ENCODE measurements at regions of chr14 and their contacts with region 1.

Region 1: GRCh38 chr14:20413045-20413799 is at the start of gene TEP1:
- DNase-seq: peak; percentile 80
- ATAC-seq: peak; percentile 84
- H3K4me3 Mint-ChIP-seq: peak within 1 kb of the TSS; percentile 87
- H3K27ac Mint-ChIP-seq: peak within 1 kb of the TSS; percentile 95
- H3K4me1 Mint-ChIP-seq: peaks cover 16% of the 10 kb centered on the region
- H3K27me3 Mint-ChIP-seq: no peaks in the 10 kb centered on the region
- CTCF ChIP-seq: no peak
- total RNA-seq, gene TEP1: 16.0 to 19.4 TPM (median 18.8 TPM) in 3 replicates

Region 2: GRCh38 chr14:20343092-20343861 is 69.9 kb before region 1 on chr14 and contains the start of gene PARP2:
- CTCF ChIA-PET with region 1: interaction called, 20 read pairs
- POLR2A ChIA-PET with region 1: interaction called, 23 read pairs
- DNase-seq: peak; percentile 99
- ATAC-seq: peak; percentile 97
- H3K4me3 Mint-ChIP-seq: peak within 1 kb of the TSS; percentile 91
- H3K27ac Mint-ChIP-seq: peak within 1 kb of the TSS; percentile 98
- H3K4me1 Mint-ChIP-seq: peaks cover 8% of the 10 kb centered on the region
- H3K27me3 Mint-ChIP-seq: no peaks in the 10 kb centered on the region
- CTCF ChIP-seq: no peak
- total RNA-seq, gene PARP2: 34.5 to 37.1 TPM (median 36.8 TPM) in 3 replicates

Region 3: GRCh38 chr14:20365928-20366327 is 47.3 kb before region 1 on chr14:
- CTCF ChIA-PET with region 1: no interaction called
- POLR2A ChIA-PET with region 1: no interaction called
- DNase-seq: no peak
- ATAC-seq: no peak
- H3K4me3 Mint-ChIP-seq: no peak overlapping the region
- H3K27ac Mint-ChIP-seq: no peak overlapping the region
- H3K4me1 Mint-ChIP-seq: no peaks in the 10 kb centered on the region
- H3K27me3 Mint-ChIP-seq: no peaks in the 10 kb centered on the region
- CTCF ChIP-seq: no peak

Region 4: GRCh38 chr14:20424851-20425250 is 11.6 kb after region 1 on chr14:
- CTCF ChIA-PET with region 1: interaction called, 16 read pairs
- POLR2A ChIA-PET with region 1: no interaction called
- DNase-seq: no peak
- ATAC-seq: no peak
- H3K4me3 Mint-ChIP-seq: no peak overlapping the region
- H3K27ac Mint-ChIP-seq: no peak overlapping the region
- H3K4me1 Mint-ChIP-seq: peaks cover 30% of the 10 kb centered on the region
- H3K27me3 Mint-ChIP-seq: no peaks in the 10 kb centered on the region
- CTCF ChIP-seq: no peak

Region 5: DNA sequence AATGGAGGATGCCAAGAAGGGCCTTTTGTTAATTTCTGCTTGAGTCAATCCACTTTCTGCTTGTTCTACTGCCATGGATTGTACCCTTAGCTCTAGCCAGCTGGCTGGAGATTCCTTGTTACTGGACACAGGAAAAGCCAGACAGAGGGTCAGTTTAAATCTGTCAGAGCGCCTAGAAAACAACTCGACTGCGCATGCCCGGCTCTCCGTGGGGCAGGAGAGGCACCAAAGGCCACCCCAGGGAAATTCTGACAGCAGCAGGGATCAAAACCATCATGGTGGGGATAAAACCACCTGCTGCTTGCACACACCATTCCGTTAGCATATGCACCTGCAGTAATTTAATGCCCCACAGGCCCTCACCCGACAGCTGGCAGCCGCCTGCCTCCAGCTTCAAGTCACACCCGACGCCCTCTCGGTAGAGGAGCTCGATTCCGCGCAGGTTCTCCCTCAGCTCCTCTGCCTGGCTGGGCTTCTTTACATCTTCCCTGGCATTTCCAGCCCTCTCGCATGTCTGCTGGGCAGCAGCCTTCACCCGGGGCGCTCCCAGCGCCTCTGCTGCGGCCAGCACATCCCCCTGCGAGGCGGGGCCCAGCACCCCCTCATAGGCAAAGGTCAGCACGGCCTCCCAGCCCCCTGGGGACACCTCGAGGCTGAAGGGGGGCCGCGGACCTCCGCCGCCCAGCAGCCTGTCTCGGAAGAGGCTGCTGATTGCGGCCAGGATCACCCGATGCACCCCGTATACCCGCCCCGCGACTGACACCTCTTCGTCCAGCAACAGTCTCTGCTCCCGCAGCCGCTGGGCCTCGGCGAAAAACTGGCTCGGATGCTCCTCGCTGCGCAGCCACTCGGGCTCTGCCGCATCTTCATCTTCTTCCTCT is 21.7 kb after region 1 on chr14:
- CTCF ChIA-PET with region 1: interaction called, 21 read pairs
- POLR2A ChIA-PET with region 1: no interaction called
- DNase-seq: peak; percentile 45
- ATAC-seq: peak; percentile 63
- H3K4me3 Mint-ChIP-seq: peak overlapping the region; percentile 73
- H3K27ac Mint-ChIP-seq: no peak overlapping the region
- H3K4me1 Mint-ChIP-seq: peaks cover 13% of the 10 kb centered on the region
- H3K27me3 Mint-ChIP-seq: peaks cover 34% of the 10 kb centered on the region
- CTCF ChIP-seq: no peak

Region 6: GRCh38 chr14:20454516-20455354 is 41.5 kb after region 1 on chr14 and contains the starts of genes APEX1 and OSGEP:
- CTCF ChIA-PET with region 1: interaction called, 10 read pairs
- POLR2A ChIA-PET with region 1: interaction called, 3 read pairs
- DNase-seq: peak; percentile 97
- ATAC-seq: peak; percentile 82
- H3K4me3 Mint-ChIP-seq: no peak within 1 kb of the TSS
- H3K27ac Mint-ChIP-seq: no peak within 1 kb of the TSS
- H3K4me1 Mint-ChIP-seq: peaks cover 3% of the 10 kb centered on the region; the same call in 1 of the 2 replicates
- H3K27me3 Mint-ChIP-seq: no peaks in the 10 kb centered on the region
- CTCF ChIP-seq: no peak
- total RNA-seq, gene APEX1: 299 to 324 TPM (median 308 TPM) in 3 replicates
- total RNA-seq, gene OSGEP: 33.3 to 40.0 TPM (median 37.3 TPM) in 3 replicates

Region 7: DNA sequence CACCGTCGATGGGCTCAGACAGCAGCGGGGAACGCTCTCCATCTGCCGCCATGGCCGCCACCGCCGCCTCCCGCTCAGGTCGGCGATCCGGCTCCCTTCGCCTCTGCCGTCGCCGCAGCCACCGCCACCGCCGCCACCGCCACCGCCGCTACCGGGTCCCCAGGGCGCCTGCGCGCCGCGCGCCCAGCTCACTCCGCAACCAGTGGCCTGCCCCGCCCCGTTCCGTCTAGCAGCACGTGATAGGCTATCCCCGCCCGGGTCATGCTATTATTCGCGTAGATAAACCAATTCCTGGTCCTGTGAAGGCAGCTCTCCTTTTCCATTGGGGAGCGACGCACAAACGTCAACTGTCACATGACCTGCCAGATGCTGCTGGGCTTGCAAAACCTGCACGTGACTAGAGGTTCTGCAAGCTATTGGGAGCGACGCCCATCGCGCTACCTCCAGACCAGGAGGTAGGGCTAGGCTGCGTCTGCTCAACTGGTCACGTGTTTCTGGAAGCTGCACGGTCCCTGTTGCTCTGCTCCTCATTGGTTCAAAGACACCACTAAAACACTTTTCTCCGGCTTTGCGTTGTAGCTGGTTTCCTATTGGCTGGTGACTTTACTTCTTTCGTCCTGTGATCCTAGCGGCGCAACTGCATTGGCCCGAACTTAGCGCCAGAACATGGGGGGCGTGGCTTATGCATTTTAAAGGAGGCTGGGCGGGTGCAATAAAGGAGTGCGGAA is 48.2 kb after region 1 on chr14 and contains the start of gene PIP4P1:
- CTCF ChIA-PET with region 1: interaction called, 18 read pairs
- POLR2A ChIA-PET with region 1: interaction called, 3 read pairs
- DNase-seq: peak; percentile 97
- ATAC-seq: peak; percentile 95
- H3K4me3 Mint-ChIP-seq: peak within 1 kb of the TSS; percentile 84
- H3K27ac Mint-ChIP-seq: peak within 1 kb of the TSS; percentile 98
- H3K4me1 Mint-ChIP-seq: peaks cover 16% of the 10 kb centered on the region
- H3K27me3 Mint-ChIP-seq: peaks cover 5% of the 10 kb centered on the region
- CTCF ChIP-seq: no peak
- total RNA-seq, gene PIP4P1: 28.3 to 34.1 TPM (median 29.7 TPM) in 3 replicates

Region 8: GRCh38 chr14:20550926-20551325 is 137.7 kb after region 1 on chr14:
- CTCF ChIA-PET with region 1: no interaction called
- POLR2A ChIA-PET with region 1: no interaction called
- DNase-seq: no peak
- ATAC-seq: no peak
- H3K4me3 Mint-ChIP-seq: no peak overlapping the region
- H3K27ac Mint-ChIP-seq: no peak overlapping the region
- H3K4me1 Mint-ChIP-seq: peaks cover 2% of the 10 kb centered on the region
- H3K27me3 Mint-ChIP-seq: no peaks in the 10 kb centered on the region
- CTCF ChIP-seq: no peak

Region 9: DNA sequence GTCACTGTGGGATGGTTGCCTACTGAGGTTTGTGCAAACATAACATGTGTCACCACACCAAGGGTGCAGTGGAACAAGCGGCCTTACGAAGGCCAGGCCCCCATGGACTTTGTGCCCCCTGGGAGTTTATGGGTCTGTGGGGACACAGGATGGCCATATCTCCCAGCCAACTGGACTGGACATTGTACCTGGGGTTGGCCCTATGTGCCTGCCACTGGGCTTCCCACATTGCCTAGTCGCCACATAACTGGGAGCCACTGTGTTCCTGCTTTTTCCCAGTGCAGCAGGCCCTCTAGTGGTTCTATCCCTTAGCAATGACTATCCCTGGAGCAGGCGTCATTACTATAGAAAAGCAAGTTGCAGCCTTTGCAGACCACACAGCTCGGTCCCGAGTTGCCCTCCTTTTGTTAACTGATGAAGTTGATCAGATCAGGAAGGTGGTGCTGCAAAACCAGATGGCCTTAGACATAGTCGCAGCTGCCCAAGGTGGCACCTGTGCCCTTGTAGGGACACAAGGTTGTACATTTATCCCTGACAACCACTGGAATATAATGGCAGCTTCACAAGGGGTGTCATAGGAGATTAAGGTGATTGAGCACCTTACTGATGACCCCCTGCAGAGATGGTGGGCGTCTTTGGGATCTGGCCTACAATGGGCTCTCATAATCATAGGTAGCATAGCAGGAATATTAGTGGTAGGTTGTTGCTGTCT is 193.1 kb after region 1 on chr14:
- CTCF ChIA-PET with region 1: interaction called, 19 read pairs
- POLR2A ChIA-PET with region 1: no interaction called
- DNase-seq: peak; percentile 67
- ATAC-seq: peak; percentile 66
- H3K4me3 Mint-ChIP-seq: no peak overlapping the region
- H3K27ac Mint-ChIP-seq: no peak overlapping the region
- H3K4me1 Mint-ChIP-seq: peaks cover 11% of the 10 kb centered on the region
- H3K27me3 Mint-ChIP-seq: no peaks in the 10 kb centered on the region
- CTCF ChIP-seq: no peak